Activated B cell treated with CpG ODN at 0.5 μM for 24 hours (primary cell): ENCODE measurements at regions of chr3 and their contacts with region 1.

Region 1: GRCh38 chr3:48472915-48473616 is 26.5 kb downstream of the ATRIP start:
- DNase-seq: peak; percentile 84
- ATAC-seq: peak; percentile 89
- H3K4me3 Mint-ChIP-seq: peak overlapping the region; percentile 89
- H3K27ac Mint-ChIP-seq: peak overlapping the region; percentile 99
- H3K4me1 Mint-ChIP-seq: peaks cover 79% of the 10 kb centered on the region
- H3K27me3 Mint-ChIP-seq: no peaks in the 10 kb centered on the region
- CTCF ChIP-seq: no peak

Region 2: GRCh38 chr3:48023377-48023776 is 449.7 kb before region 1 on chr3:
- CTCF ChIA-PET with region 1: no interaction called
- POLR2A ChIA-PET with region 1: no interaction called
- intact Hi-C with region 1: no loop called
- DNase-seq: no peak
- ATAC-seq: no peak
- H3K4me3 Mint-ChIP-seq: no peak overlapping the region
- H3K27ac Mint-ChIP-seq: no peak overlapping the region
- H3K4me1 Mint-ChIP-seq: peaks cover 32% of the 10 kb centered on the region
- H3K27me3 Mint-ChIP-seq: no peaks in the 10 kb centered on the region
- CTCF ChIP-seq: no peak

Region 3: DNA sequence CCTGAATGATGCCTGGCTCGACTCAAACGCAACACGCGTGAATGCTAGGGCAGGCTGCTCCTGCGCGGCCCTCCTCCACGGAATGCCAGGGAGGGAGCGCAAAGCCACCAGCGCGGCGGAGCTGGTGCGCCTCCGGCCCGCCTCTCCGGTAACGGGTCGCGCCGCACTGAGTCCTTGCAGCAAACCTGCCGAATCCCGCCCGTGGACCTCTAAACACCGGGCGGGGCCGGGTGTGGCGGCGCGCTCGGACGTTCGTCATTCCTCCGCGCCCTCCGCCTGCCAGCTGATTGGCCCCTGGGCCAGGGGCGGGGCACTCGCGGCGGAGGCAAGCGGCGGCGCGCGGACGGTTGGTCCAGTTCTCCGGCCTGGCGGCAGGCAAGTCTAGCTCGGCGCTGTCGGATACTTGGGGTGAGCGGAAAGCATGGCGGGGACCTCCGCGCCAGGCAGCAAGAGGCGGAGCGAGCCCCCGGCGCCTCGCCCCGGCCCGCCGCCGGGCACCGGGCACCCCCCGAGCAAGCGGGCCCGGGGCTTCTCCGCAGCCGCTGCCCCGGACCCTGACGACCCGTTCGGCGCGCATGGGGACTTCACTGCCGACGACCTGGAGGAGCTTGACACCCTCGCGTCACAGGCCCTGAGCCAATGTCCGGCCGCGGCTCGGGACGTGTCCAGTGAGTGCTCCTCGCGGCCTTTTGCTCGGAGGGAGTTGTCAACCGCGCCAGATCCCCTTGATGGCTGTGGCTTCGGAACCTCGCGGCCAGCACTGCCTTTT is 26.5 kb before region 1 on chr3 and contains the start of gene ATRIP:
- CTCF ChIA-PET with region 1: interaction called, 4 read pairs
- POLR2A ChIA-PET with region 1: interaction called, 24 read pairs
- intact Hi-C with region 1: no loop called
- DNase-seq: peak; percentile 88
- ATAC-seq: peak; percentile 100
- H3K4me3 Mint-ChIP-seq: peak within 1 kb of the TSS; percentile 85
- H3K27ac Mint-ChIP-seq: peak within 1 kb of the TSS; percentile 82
- H3K4me1 Mint-ChIP-seq: peaks cover 41% of the 10 kb centered on the region
- H3K27me3 Mint-ChIP-seq: no peaks in the 10 kb centered on the region
- CTCF ChIP-seq: no peak
- total RNA-seq, gene ATRIP: 10.5 and 14.6 TPM in 2 replicates